ENCODE measurements at regions of chr1 and their contacts with region 1.

Region 1: GRCh38 chr1:6108937-6109614 is 63.4 kb downstream of the KCNAB2 start:
- DNase-seq: peak; percentile 50
- H3K4me3 ChIP-seq: no peak overlapping the region
- H3K27ac ChIP-seq: no peak overlapping the region
- H3K4me1 ChIP-seq: peaks cover 4% of the 10 kb centered on the region
- H3K27me3 ChIP-seq: no peaks in the 10 kb centered on the region
- CTCF ChIP-seq: peak; percentile 61 to 96

Region 2: DNA sequence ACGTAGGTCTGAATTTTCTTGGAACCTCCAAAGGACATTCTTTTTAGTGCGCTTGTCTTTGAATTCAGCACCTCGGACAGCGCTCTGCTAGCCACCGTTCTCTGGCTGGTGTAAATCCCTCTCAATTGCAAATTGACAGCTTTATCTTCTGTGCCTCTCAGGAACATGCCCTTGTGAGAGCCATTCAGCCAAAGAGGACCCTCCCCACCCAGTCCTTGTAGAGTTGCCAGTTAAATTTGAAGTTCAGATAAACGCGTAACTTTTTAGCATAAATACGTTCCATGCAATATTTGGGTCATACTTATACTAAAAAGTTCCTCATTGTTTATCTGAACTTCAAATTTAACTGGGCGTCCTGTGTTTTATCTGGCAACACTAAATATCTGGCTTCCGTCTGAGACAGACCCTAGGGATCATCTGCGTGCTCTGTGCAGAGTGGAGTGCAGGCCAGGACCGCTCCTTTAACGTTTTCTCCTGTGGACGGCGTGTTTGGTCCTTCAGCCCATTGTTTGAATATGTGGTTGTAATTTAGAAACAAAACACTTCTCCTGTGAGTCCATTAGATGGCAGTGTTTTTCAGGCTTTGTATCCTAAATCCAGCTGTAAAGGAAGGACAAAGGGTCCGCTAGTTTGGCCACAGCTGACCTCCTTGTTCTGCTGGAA is 56.4 kb before region 1 on chr1:
- CTCF ChIA-PET with region 1: no interaction called
- dilution Hi-C with region 1: no loop called
- in situ Hi-C with region 1: no loop called
- intact Hi-C with region 1: loop called (anchors 2 kb)
- DNase-seq: peak; percentile 46
- H3K4me3 ChIP-seq: no peak overlapping the region
- H3K27ac ChIP-seq: no peak overlapping the region
- H3K4me1 ChIP-seq: no peaks in the 10 kb centered on the region
- H3K27me3 ChIP-seq: no peaks in the 10 kb centered on the region
- CTCF ChIP-seq: peak; percentile 57 to 64

Region 3: GRCh38 chr1:6171548-6172119 is 62.6 kb after region 1 on chr1:
- CTCF ChIA-PET with region 1: no interaction called
- dilution Hi-C with region 1: no loop called
- in situ Hi-C with region 1: no loop called
- intact Hi-C with region 1: loop called (anchors 1 kb)
- DNase-seq: no peak
- H3K4me3 ChIP-seq: no peak overlapping the region
- H3K27ac ChIP-seq: no peak overlapping the region
- H3K4me1 ChIP-seq: peaks cover 4% of the 10 kb centered on the region
- H3K27me3 ChIP-seq: peaks cover 1% of the 10 kb centered on the region
- CTCF ChIP-seq: peak; percentile 22 to 57

Region 4: DNA sequence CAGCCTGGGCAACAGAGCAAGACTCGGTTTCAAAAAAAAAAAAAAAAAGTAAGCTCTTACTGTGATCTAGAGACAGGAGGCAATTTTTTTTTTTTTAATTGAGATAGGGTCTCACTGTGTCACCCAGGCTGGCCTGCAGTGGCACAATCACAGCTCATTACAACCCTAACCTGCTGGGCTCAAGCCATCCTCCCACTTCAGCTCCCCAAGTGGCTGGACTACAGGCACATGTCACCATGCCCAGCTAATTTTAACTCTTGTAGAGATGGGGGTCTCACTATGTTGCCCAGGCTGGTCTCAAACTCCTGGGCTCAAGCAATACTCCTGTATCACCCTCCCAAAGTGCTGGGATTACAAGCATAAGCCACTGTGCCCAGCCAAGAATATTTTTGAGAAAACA is 82.9 kb after region 1 on chr1:
- CTCF ChIA-PET with region 1: no interaction called
- dilution Hi-C with region 1: loop called (anchors 5 kb)
- in situ Hi-C with region 1: no loop called
- intact Hi-C with region 1: no loop called
- DNase-seq: no peak
- H3K4me3 ChIP-seq: no peak overlapping the region
- H3K27ac ChIP-seq: no peak overlapping the region
- H3K4me1 ChIP-seq: peaks cover 5% of the 10 kb centered on the region
- H3K27me3 ChIP-seq: no peaks in the 10 kb centered on the region
- CTCF ChIP-seq: no peak

Region 5: DNA sequence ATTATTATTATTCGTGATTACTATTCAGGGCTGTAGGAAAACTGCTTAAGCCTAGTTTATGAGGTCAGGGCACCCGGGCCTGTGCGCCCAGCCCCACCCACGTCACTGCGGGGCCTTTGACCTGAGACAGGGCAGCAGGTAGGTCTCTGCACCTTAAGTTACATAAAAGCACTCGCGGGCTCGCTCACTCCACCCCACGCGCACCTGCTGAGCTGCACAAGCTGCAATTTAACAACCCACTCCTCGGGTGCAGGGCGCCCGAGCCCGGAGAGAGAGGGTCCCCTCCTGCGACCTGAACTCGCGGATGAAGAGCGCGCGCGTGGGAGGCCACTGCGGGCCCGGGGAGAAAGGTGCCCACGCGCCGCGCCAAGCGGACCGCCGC is 126.2 kb after region 1 on chr1:
- CTCF ChIA-PET with region 1: no interaction called
- dilution Hi-C with region 1: no loop called
- in situ Hi-C with region 1: loop called in 1 of 2 experiments (anchors 10 kb)
- intact Hi-C with region 1: no loop called
- DNase-seq: no peak
- H3K4me3 ChIP-seq: peak overlapping the region; percentile 68 to 83 (median 70)
- H3K27ac ChIP-seq: peak overlapping the region; percentile 30
- H3K4me1 ChIP-seq: peaks cover 7% of the 10 kb centered on the region
- H3K27me3 ChIP-seq: no peaks in the 10 kb centered on the region
- CTCF ChIP-seq: no peak

Region 6: GRCh38 chr1:6343506-6344405 is 234.7 kb after region 1 on chr1:
- CTCF ChIA-PET with region 1: no interaction called
- dilution Hi-C with region 1: no loop called
- in situ Hi-C with region 1: no loop called
- intact Hi-C with region 1: loop called (anchors 1 kb)
- DNase-seq: peak; percentile 94
- H3K4me3 ChIP-seq: no peak overlapping the region
- H3K27ac ChIP-seq: no peak overlapping the region
- H3K4me1 ChIP-seq: peaks cover 33% of the 10 kb centered on the region
- H3K27me3 ChIP-seq: no peaks in the 10 kb centered on the region
- CTCF ChIP-seq: peak; percentile 97 to 100

Measured in mammary epithelial cell (primary cell).